PC-3 (cell line): ENCODE measurements at regions of chr19 and their contacts with region 1.

Region 1: GRCh38 chr19:9485140-9485539 is 13.3 kb downstream of the ZNF560 start:
- DNase-seq: no peak
- ATAC-seq: no peak
- H3K4me3 ChIP-seq: no peak overlapping the region; the same call in 1 of the 2 replicates
- H3K27ac ChIP-seq: no peak overlapping the region
- H3K4me1 ChIP-seq: no peaks in the 10 kb centered on the region
- H3K27me3 ChIP-seq: no peaks in the 10 kb centered on the region
- CTCF ChIP-seq: no peak

Region 2: DNA sequence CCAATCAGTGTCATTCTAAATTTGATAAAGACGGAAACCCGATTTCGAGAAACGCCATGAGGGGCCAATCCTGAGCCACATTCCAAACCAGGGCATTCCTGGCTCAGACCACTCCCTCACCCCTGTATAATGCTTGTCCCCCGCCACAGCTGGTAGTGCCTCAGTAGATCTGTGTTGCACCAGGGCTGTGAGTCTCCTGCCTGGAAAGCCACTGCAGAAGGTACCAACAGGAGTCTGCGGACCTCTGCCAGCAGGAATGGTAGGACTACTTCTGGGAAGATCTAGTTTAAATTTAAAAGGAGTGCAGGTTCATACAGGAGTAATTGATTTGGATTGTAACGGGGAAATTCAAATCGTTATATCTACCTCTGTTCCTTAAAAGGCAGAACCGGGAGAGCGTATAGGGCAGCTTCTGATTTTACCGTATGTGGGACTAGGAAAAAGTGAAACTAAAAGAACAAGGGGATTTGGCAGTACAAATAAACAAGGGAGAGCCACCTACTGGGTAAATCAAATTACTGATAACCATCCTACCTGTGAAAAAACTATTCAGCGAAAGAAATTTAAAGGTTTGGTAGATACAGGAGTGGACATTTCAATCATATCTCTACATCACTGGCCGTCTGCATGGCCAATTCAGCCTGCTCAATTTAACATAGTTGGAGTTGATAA is 29.0 kb before region 1 on chr19:
- CTCF ChIA-PET with region 1: no interaction called
- POLR2A ChIA-PET with region 1: no interaction called
- intact Hi-C with region 1: no loop called
- DNase-seq: no peak
- ATAC-seq: no peak
- H3K4me3 ChIP-seq: no peak overlapping the region
- H3K27ac ChIP-seq: no peak overlapping the region
- H3K4me1 ChIP-seq: no peaks in the 10 kb centered on the region
- H3K27me3 ChIP-seq: no peaks in the 10 kb centered on the region
- CTCF ChIP-seq: no peak

Region 3: DNA sequence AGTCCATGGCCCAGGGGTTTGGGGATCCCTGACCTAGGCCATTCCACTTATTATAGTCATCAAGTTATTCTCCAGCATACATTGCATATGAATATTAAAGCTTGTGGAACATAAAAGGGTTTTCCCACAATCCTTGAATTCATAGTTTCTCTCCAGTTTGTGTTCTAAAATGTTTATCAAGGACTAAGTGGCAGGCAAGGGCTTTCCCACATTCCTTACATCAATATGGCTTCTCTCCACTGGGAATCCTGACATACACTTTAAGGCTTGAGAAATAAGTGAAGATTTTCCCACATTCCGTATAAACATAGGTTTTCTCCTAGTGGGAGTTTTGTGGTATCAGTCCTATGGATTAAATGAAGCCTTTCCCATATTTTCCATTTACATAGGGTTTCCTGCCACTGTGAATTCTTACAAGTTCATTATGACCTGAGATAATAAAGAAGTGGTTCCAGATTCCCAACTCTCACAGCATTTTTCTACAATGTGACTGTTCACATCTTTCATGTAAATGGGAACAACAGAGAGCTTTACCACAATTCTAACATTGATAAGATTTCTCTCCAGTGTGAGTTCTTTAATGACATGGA is 38.8 kb after region 1 on chr19:
- CTCF ChIA-PET with region 1: no interaction called
- POLR2A ChIA-PET with region 1: interaction called, 11 read pairs
- intact Hi-C with region 1: no loop called
- DNase-seq: no peak
- ATAC-seq: no peak
- H3K4me3 ChIP-seq: peak overlapping the region; percentile 10; the same call in 1 of the 2 replicates
- H3K27ac ChIP-seq: no peak overlapping the region
- H3K4me1 ChIP-seq: no peaks in the 10 kb centered on the region
- H3K27me3 ChIP-seq: no peaks in the 10 kb centered on the region
- CTCF ChIP-seq: no peak